ENCODE measurements at regions of chr14 and their contacts with region 1.

Region 1: GRCh38 chr14:72643317-72643801 is 250.5 kb downstream of the DPF3 start:
- DNase-seq: peak; percentile 96
- H3K4me3 ChIP-seq: no peak overlapping the region
- H3K27ac ChIP-seq: peak overlapping the region; percentile 96
- H3K4me1 ChIP-seq: peaks cover 31% of the 10 kb centered on the region
- H3K27me3 ChIP-seq: no peaks in the 10 kb centered on the region
- CTCF ChIP-seq: peak in 1 of 2 donors; percentile 8
- POLR2A ChIP-seq: peak; percentile 47

Region 2: DNA sequence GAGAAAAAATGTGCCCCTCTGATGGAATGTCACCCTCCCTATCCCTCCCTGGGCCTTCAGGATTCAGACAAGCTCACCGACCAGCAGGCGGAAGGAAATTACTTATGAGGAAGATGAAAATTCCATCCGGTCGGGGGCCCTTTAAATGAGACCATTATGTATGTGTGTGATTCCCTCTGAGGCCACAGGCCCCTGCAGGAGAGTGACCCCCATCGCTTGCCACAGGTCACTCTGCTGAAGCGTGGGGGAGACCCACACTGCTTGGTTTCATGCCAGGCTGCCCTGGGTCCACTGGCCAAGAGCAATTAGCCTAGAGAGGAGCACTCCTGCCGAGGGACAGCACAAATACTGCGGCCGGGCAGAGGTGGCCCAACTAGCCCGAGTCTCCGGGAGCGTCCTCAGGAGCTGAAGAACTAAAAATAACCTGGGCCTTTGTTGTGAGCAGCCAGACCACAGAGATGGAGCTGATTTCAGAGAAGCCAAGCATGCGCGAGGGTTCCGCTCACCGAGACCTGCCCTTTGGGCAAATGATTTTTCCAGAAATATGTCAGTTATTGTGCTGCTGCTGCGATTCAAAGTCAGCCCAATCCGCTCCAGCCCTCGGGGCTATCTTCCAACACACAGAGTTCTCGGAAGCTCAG is 25.8 kb before region 1 on chr14:
- CTCF ChIA-PET with region 1: interaction called, 4 read pairs
- POLR2A ChIA-PET with region 1: no interaction called
- dilution Hi-C with region 1: no loop called
- intact Hi-C with region 1: loop called (anchors 1 kb)
- DNase-seq: peak; percentile 48
- H3K4me3 ChIP-seq: no peak overlapping the region
- H3K27ac ChIP-seq: peak overlapping the region; percentile 80
- H3K4me1 ChIP-seq: peaks cover 44% of the 10 kb centered on the region
- H3K27me3 ChIP-seq: no peaks in the 10 kb centered on the region
- CTCF ChIP-seq: no peak
- POLR2A ChIP-seq: no peak

Measured in endothelial cell of umbilical vein (primary cell).